Right ventricle myocardium inferior (tissue), 1 donor: ENCODE measurements at regions of chr3 and their contacts with region 1.

Region 1: GRCh38 chr3:65732051-65732935 is 306.4 kb downstream of the MAGI1 start:
- DNase-seq: no peak
- ATAC-seq: peak; percentile 68

Region 2: DNA sequence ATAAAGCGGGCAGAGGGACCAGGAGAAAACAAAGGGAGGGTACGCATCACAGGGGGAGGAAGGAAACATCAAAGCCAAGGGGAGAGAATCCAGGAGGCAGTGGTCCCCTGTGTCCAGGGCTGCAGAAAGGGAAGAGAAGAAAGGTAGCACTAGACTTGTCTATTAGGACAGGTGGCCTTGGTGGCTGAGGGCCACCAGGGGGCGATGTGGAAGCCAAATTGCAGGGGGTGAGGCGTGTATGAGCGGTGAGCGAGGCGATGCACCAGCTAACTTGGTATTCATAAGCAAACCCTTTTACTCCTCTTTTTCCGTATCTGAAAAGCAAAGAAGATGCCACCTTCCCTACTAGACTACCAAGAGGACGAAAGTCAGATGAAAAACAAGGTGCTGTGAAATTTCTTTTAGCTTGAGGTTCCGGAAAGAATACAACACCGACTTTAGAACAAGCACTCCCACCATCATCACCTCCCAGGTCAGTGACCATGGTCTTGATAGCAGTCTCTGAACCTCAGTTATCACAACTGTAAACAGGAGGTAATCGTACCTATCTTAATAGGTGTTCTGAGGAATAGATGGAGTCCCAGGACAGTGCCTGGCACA is 390.1 kb before region 1 on chr3:
- intact Hi-C with region 1: loop called (anchors 10 kb)
- DNase-seq: no peak
- ATAC-seq: peak; percentile 57

Region 3: GRCh38 chr3:65439641-65440284 is 292.5 kb before region 1 on chr3:
- intact Hi-C with region 1: loop called (anchors 5 kb)
- DNase-seq: no peak
- ATAC-seq: peak; percentile 71

Region 4: GRCh38 chr3:65575373-65575840 is 156.9 kb before region 1 on chr3:
- intact Hi-C with region 1: no loop called
- DNase-seq: no peak
- ATAC-seq: no peak

Region 5: DNA sequence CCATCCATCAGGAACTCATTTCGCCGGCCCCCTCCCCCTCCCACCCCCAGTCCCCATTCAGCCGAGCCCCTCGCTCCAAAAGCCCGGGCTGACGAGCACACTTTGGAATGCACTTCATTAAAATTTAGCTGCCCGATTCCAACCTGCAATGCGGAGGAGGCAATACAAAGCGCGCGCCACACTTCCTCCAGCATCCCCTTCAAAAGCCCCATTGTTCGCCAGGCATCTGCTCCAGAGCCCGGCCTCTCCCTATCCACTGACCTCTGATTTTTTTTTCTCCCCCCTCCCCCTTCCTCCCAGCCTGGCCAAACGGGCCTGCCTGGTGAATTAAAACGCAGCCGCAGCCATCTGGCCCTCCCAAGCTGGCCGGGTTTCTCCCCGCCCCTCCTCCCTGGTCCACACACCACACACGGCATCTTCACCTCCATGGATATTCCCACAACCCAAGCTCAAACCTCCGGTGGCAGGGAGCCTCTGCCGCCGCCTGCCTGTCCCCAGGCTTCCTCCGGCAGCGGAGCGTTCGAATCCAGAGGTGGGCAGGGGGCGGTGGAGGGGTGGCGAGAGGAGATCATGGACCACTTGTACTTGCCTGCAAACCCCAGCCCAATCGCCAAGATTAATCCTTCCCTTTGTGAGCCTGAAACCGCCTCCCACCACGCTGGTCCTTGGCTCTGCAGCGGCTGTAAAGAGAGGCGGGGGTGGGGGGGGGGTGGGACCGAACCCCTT is 134.9 kb before region 1 on chr3:
- intact Hi-C with region 1: loop called (anchors 10 kb)
- DNase-seq: peak; percentile 69
- ATAC-seq: peak; percentile 44